Head of caudate nucleus (tissue), 42 donors: ENCODE measurements at regions of chr11 and their contacts with region 1.

Region 1: GRCh38 chr11:75802913-75803820 is 11.8 kb upstream of the UVRAG start:
- DNase-seq: peak; percentile 41 to 95 (median 84)

Region 2: DNA sequence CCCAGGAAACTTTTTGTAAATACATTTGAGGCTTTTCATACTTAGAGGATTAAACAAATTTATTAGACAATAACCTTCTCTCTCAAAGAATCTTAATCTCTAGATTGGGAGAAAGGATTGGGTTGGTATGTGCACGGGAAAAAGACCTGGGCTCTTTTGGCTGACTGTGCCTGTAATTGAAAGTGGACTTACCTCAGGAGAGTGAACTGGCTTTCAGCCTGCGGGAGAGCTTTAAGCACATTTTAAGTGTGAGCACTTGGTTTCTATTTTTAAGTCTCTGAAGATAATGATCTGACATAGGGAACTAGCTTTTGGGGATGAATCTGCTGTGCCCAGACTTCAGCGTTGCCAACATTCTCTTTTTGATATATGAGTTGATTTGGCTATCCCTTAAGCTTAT is 47.6 kb after region 1 on chr11:
- intact Hi-C with region 1: no loop called
- DNase-seq: no peak

Region 3: GRCh38 chr11:75867775-75868374 is 64.7 kb after region 1 on chr11:
- intact Hi-C with region 1: loop called (anchors 5 kb)
- DNase-seq: peak in 21 of 42 donors; percentile 26 to 86 (median 59)

Region 4: GRCh38 chr11:76152086-76152681 is 349.0 kb after region 1 on chr11:
- intact Hi-C with region 1: loop called (anchors 5 kb)
- DNase-seq: peak; percentile 70 to 95 (median 88)